CD8-positive, alpha-beta T cell (primary cell): ENCODE measurements at regions of chr18 and their contacts with region 1.

Region 1: DNA sequence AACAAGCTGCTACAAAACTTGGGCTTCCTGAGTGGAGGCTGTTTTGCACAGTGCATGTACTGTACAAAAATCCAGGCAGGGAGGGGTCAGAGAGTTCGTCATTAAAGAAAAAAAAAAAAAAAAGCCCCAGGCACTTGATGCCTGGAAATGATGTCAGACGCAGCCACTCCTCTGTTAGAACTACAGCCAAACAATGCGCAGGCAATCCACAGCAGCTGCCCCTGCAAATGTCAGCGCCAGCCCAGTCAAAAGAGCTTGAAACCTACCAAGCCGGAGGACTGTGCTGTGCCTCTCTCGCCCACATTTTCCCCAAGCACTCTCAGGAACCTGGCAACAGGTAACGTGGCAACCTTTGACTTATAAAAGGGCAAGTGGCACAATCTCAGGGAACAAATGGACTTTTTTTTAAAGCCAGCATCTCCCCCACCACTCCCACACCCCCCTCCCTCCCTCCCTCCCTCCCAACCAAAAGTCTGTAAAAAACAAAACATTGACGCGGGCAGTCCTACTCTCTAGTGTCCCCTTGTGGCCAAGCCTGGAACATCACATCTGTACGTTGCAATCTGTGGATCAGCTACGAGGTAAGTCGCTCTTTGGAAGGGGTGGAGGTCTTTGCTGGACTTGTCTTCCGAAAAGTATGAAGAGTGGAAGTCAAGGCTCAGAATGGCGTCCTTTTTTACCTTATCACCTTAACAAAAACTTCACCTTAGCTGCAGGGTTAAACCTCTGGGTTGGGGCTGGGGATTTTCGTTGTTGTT is 144.1 kb downstream of the TGIF1 start:
- DNase-seq: peak; percentile 82 to 97 (median 89)
- ATAC-seq: peak; percentile 81
- H3K4me3 ChIP-seq: peak overlapping the region; percentile 67
- H3K4me3 Mint-ChIP-seq: peak overlapping the region; percentile 91
- H3K27ac ChIP-seq: peak overlapping the region; percentile 93 to 99
- H3K27ac Mint-ChIP-seq: peak overlapping the region; percentile 99
- H3K4me1 ChIP-seq: peaks cover 41% of the 10 kb centered on the region
- H3K4me1 Mint-ChIP-seq: peaks cover 50% of the 10 kb centered on the region
- H3K27me3 ChIP-seq: no peaks in the 10 kb centered on the region
- H3K27me3 Mint-ChIP-seq: no peaks in the 10 kb centered on the region
- CTCF ChIP-seq: peak; percentile 80

Region 2: DNA sequence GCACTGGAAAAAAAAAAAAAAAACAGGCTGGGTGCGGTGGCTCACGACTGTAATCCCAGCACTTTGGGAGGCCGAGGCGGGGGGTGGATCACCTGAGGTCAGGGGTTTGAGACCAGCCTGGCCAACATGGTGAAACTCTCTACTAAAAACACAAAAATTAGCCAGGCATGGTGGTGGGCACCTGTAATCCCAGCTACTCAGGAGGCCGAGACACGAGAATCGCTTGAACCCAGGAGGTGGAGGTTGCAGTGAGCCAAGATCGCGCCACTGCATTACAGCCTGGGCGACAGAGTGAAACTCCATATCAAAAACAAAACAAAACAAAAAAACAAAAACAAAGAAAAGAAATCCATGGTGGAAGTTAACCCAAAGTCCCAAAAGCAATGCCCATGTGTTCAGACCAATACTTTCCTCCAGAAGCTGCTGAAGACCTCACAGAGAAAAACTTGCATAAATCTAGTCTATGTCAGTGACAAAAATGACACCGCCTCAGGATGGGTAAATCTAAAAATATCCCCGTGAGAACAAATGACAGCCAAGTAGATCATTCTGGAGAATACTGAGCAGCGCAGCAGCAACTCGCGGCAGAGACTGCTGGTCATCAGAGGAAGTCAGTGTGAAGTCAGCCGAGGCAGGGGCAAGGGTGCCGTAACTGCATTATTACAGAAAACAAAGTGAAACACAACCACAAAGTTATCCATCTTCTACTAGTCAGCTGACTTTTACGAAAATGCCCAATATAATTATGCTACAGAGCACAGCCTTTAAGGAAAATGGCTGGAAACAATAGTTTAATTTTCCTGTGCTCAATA is 622.1 kb before region 1 on chr18:
- CTCF ChIA-PET with region 1: no interaction called
- POLR2A ChIA-PET with region 1: no interaction called
- intact Hi-C with region 1: loop called in 1 of 2 experiments (anchors 5 kb)
- DNase-seq: peak; percentile 30 to 90 (median 72)
- ATAC-seq: peak; percentile 78
- H3K4me3 ChIP-seq: peak overlapping the region; percentile 41
- H3K4me3 Mint-ChIP-seq: peak overlapping the region; percentile 88
- H3K27ac ChIP-seq: peak overlapping the region; percentile 43 to 96
- H3K27ac Mint-ChIP-seq: peak overlapping the region; percentile 95
- H3K4me1 ChIP-seq: peaks cover 81% of the 10 kb centered on the region
- H3K4me1 Mint-ChIP-seq: peaks cover 91% of the 10 kb centered on the region
- H3K27me3 ChIP-seq: no peaks in the 10 kb centered on the region
- H3K27me3 Mint-ChIP-seq: no peaks in the 10 kb centered on the region
- CTCF ChIP-seq: no peak

Region 3: GRCh38 chr18:3245853-3246634 is 348.0 kb before region 1 on chr18:
- CTCF ChIA-PET with region 1: interaction called, 4 read pairs
- POLR2A ChIA-PET with region 1: interaction called, 20 read pairs
- intact Hi-C with region 1: loop called in 1 of 2 experiments (anchors 1 kb)
- DNase-seq: peak; percentile 44 to 89 (median 78)
- ATAC-seq: peak; percentile 60
- H3K4me3 ChIP-seq: peak overlapping the region; percentile 77 to 90
- H3K4me3 Mint-ChIP-seq: peak overlapping the region; percentile 92
- H3K27ac ChIP-seq: peak overlapping the region; percentile 79 to 89
- H3K27ac Mint-ChIP-seq: peak overlapping the region; percentile 90
- H3K4me1 ChIP-seq: peaks cover 11% of the 10 kb centered on the region
- H3K4me1 Mint-ChIP-seq: peaks cover 39% of the 10 kb centered on the region
- H3K27me3 ChIP-seq: no peaks in the 10 kb centered on the region
- H3K27me3 Mint-ChIP-seq: no peaks in the 10 kb centered on the region
- CTCF ChIP-seq: peak; percentile 84

Region 4: DNA sequence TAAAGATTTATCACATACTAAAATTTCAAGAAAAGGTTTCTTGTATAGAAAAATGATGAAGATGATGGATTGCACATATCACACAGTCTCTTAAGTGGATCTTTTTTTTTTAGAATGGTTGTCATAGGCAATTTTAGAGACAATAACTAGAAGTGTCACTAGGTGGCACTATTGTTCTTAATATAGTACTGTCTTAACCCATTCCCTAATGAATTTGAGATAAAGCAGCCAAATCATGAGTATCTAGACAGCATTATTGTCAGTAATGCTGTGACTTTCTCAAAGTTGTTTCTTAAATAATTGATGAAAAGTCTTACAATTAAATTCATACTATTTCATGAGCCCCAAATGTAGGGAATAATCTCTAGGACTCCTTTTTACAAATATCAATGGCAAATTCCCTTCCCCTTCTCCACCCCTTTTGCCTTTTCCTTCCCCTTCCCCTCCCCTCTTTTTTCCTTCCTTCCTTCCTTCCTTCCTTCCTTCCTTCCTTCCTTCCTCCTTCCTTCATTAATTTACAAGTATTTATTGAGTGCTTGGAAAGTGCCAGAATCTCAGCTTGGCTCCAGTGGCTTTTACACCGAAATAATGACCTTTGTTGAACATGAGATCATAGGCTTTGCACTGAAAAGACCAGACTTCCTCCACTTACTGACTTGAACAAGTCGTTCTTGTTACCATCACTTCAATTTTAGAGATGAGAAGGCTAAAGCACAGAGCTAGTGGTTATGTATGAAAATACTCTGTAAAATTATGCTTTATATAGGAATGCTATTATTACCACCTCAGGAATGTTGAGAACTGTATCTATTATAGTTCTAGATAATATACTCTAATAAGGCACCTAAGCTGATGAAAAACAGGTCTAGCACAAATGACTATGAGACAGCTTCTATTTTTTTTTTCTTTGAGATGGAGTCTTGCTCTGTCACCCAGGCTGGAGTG is 312.4 kb before region 1 on chr18:
- CTCF ChIA-PET with region 1: interaction called, 10 read pairs
- POLR2A ChIA-PET with region 1: no interaction called
- intact Hi-C with region 1: no loop called
- DNase-seq: peak in 2 of 9 experiments; percentile 77 to 84
- ATAC-seq: peak; percentile 93
- H3K4me3 ChIP-seq: no peak overlapping the region
- H3K4me3 Mint-ChIP-seq: no peak overlapping the region
- H3K27ac ChIP-seq: no peak overlapping the region
- H3K27ac Mint-ChIP-seq: no peak overlapping the region
- H3K4me1 ChIP-seq: no peaks in the 10 kb centered on the region
- H3K4me1 Mint-ChIP-seq: peaks cover 4% of the 10 kb centered on the region
- H3K27me3 ChIP-seq: no peaks in the 10 kb centered on the region
- H3K27me3 Mint-ChIP-seq: no peaks in the 10 kb centered on the region
- CTCF ChIP-seq: peak; percentile 75

Region 5: DNA sequence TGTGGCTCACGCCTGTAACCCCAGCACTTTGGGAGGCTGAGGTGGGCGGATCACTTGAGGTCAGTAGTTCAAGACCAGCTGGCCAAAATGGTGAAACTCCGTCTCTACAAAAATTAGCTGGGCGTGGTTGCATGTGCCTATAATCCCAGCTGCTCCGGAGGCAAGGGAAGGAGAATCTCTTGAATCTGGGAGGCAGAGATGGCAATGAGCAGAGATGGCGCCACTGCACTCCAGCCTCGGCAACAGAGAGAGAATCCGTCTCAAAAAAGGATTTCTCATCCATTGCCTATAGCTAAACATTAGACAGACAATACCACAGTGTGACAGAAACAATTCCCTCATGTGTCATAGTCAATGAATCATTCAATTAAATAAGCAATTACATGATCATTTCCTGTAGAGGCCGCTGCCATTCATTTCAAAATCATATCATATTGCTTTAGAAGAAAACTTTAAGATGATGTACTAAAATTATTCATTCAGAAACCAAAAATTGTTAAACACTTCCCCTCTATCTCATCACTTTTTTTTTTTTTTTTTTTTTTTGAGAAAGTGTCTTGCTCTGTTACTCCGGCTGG is 213.6 kb before region 1 on chr18:
- CTCF ChIA-PET with region 1: no interaction called
- POLR2A ChIA-PET with region 1: no interaction called
- intact Hi-C with region 1: loop called in 1 of 2 experiments (anchors 5 kb)
- DNase-seq: peak in 2 of 9 experiments; percentile 51 to 61
- ATAC-seq: peak; percentile 58
- H3K4me3 ChIP-seq: no peak overlapping the region
- H3K4me3 Mint-ChIP-seq: no peak overlapping the region
- H3K27ac ChIP-seq: no peak overlapping the region
- H3K27ac Mint-ChIP-seq: no peak overlapping the region
- H3K4me1 ChIP-seq: no peaks in the 10 kb centered on the region
- H3K4me1 Mint-ChIP-seq: no peaks in the 10 kb centered on the region
- H3K27me3 ChIP-seq: no peaks in the 10 kb centered on the region
- H3K27me3 Mint-ChIP-seq: peaks cover 4% of the 10 kb centered on the region
- CTCF ChIP-seq: peak; percentile 21

Region 6: GRCh38 chr18:3454365-3455089 is 139.6 kb before region 1 on chr18:
- CTCF ChIA-PET with region 1: interaction called, 60 read pairs
- POLR2A ChIA-PET with region 1: interaction called, 63 read pairs
- intact Hi-C with region 1: loop called in 1 of 2 experiments (anchors 1 kb)
- DNase-seq: peak in 6 of 9 experiments; percentile 23 to 79 (median 37)
- ATAC-seq: no peak
- H3K4me3 ChIP-seq: peak overlapping the region; percentile 30 to 42
- H3K4me3 Mint-ChIP-seq: peak overlapping the region; percentile 92
- H3K27ac ChIP-seq: peak overlapping the region; percentile 38 to 100
- H3K27ac Mint-ChIP-seq: peak overlapping the region; percentile 100
- H3K4me1 ChIP-seq: peaks cover 21% of the 10 kb centered on the region
- H3K4me1 Mint-ChIP-seq: peaks cover 61% of the 10 kb centered on the region
- H3K27me3 ChIP-seq: no peaks in the 10 kb centered on the region
- H3K27me3 Mint-ChIP-seq: no peaks in the 10 kb centered on the region
- CTCF ChIP-seq: peak; percentile 87

Region 7: GRCh38 chr18:3612315-3612714 is 18.2 kb after region 1 on chr18:
- CTCF ChIA-PET with region 1: interaction called, 36 read pairs
- POLR2A ChIA-PET with region 1: interaction called, 53 read pairs
- intact Hi-C with region 1: no loop called
- DNase-seq: no peak
- ATAC-seq: no peak
- H3K4me3 ChIP-seq: no peak overlapping the region
- H3K4me3 Mint-ChIP-seq: no peak overlapping the region
- H3K27ac ChIP-seq: no peak overlapping the region
- H3K27ac Mint-ChIP-seq: no peak overlapping the region
- H3K4me1 ChIP-seq: peaks cover under 1% of the 10 kb centered on the region
- H3K4me1 Mint-ChIP-seq: peaks cover 10% of the 10 kb centered on the region
- H3K27me3 ChIP-seq: no peaks in the 10 kb centered on the region
- H3K27me3 Mint-ChIP-seq: no peaks in the 10 kb centered on the region
- CTCF ChIP-seq: no peak

Region 8: GRCh38 chr18:3728704-3729437 is 134.8 kb after region 1 on chr18:
- CTCF ChIA-PET with region 1: no interaction called
- POLR2A ChIA-PET with region 1: no interaction called
- intact Hi-C with region 1: no loop called
- DNase-seq: no peak
- ATAC-seq: no peak
- H3K4me3 ChIP-seq: no peak overlapping the region
- H3K4me3 Mint-ChIP-seq: no peak overlapping the region
- H3K27ac ChIP-seq: no peak overlapping the region
- H3K27ac Mint-ChIP-seq: no peak overlapping the region
- H3K4me1 ChIP-seq: no peaks in the 10 kb centered on the region
- H3K4me1 Mint-ChIP-seq: no peaks in the 10 kb centered on the region
- H3K27me3 ChIP-seq: peaks cover 0 to 3% of the 10 kb centered on the region in 2 experiments
- H3K27me3 Mint-ChIP-seq: peaks cover 11% of the 10 kb centered on the region
- CTCF ChIP-seq: no peak